IMR-90 (cell line): ENCODE measurements at regions of chr4 and their contacts with region 1.

Region 1: DNA sequence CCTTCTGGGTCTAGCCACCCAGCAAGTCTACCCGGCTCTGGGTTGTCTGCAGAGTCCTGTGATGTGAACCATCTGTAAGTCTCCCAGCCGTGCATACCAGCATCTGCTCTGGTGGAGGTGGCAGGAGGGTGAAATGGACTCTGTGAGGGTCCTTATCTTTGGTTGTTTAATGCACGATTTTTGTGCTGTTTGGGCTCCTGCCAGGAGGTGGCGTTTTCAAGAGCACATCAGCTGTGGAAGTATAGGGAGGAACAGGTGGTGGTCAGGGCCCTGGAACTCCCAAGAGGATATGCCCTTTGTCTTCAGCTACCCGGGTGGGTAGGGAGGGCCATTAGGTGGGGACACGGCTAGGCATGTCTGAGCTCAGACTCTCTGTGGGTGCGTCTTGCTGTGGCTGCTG is 66.5 kb upstream of the ZFP42 start:
- DNase-seq: no peak
- ATAC-seq: no peak
- H3K4me3 ChIP-seq: no peak overlapping the region
- H3K27ac ChIP-seq: no peak overlapping the region
- H3K4me1 ChIP-seq: peaks cover 2% of the 10 kb centered on the region; the same call in 1 of the 2 replicates
- H3K27me3 ChIP-seq: no peaks in the 10 kb centered on the region
- CTCF ChIP-seq: no peak
- POLR2A ChIP-seq: no peak
- RAD21 ChIP-seq: no peak

Region 2: DNA sequence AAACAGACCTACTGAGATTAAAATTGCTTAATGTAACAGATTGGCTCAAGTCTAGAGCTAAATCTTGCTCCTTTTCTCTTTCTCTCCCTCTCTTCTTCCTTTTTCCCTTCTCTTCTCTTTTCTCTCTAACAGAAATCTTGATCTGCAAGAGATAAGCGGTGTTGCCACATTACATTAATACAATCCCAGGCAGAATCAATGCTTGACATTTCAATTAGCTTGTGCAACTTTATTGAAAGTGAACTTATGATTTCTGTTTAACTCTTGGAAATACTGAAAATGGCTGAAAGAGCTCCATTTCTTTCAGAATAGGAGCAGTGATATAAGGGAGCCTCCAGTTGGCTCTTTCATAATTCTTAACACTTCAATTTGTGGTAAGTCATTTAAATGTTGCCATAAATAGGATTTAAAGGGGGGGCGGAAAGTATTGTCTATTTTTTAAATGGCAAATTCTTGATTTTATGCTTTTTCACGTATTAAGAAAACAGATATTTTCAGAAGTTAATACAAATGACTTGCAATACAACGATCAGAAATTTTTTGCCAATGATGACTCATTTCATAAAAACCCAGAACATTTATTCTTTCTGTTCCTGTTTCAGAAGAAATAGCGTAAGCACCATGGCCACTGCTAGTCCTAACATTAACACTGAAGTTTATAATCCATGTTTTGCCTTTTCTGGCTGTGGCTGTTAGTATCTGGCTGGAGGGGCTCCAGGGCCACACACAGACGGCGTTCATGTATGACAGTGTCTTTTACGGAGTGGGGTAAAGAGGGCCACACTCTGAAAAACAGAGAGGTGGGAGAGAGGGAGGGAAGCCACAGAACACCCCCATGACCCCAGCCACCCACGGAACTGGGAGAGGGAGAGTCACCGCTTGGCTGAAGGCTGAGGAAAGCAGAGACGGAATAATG is 1089.6 kb before region 1 on chr4:
- CTCF ChIA-PET with region 1: no interaction called
- POLR2A ChIA-PET with region 1: no interaction called
- dilution Hi-C with region 1: no loop called
- in situ Hi-C with region 1: no loop called
- intact Hi-C with region 1: loop called (anchors 10 kb)
- DNase-seq: peak; percentile 92
- ATAC-seq: peak; percentile 81
- H3K4me3 ChIP-seq: peak overlapping the region; percentile 28
- H3K27ac ChIP-seq: peak overlapping the region; percentile 90
- H3K4me1 ChIP-seq: peaks cover 18% of the 10 kb centered on the region
- H3K27me3 ChIP-seq: no peaks in the 10 kb centered on the region
- CTCF ChIP-seq: no peak
- POLR2A ChIP-seq: peak; percentile 42; the same call in 1 of the 2 replicates
- RAD21 ChIP-seq: no peak

Region 3: DNA sequence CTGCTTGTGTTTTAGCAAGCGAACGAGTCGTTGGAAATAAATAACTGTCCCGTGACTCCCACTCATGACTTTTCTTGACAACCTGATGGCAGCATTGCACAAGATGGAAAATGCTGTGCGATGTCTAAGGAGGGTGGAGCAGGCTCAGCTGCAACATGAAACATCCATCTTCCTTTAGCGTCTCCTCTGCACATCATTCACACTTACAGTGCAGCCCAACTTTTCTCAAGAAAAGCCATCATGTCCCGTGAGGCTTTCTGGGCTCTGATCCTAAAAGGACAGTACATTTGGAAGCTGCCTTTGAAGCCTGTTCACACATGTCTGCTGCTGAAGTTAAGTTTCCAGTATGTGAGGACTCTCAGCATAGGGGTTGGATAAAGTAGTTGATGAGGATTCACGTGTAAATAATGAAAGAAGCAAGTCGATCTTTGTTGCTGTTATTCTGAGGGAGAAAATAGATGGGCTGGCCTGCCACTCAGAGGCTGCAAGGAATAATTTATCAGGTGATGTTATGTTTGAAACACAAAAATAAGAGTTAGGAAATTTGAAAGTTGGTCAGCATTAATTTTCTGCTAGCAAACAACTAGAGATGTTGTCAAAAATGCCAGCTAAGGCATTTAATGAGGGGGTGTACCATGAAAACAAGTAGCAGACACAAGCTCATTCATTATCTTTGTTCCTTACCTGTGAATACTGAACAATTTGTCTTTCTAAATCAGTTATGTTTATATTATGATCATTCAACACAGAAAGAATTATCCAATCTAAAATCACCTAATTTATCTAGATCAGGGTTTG is 262.1 kb before region 1 on chr4:
- CTCF ChIA-PET with region 1: no interaction called
- POLR2A ChIA-PET with region 1: no interaction called
- dilution Hi-C with region 1: no loop called
- in situ Hi-C with region 1: no loop called
- intact Hi-C with region 1: loop called (anchors 10 kb)
- DNase-seq: peak; percentile 38
- ATAC-seq: peak; percentile 52
- H3K4me3 ChIP-seq: no peak overlapping the region
- H3K27ac ChIP-seq: peak overlapping the region; percentile 12; the same call in 1 of the 2 replicates
- H3K4me1 ChIP-seq: peaks cover 11% of the 10 kb centered on the region
- H3K27me3 ChIP-seq: no peaks in the 10 kb centered on the region
- CTCF ChIP-seq: no peak
- POLR2A ChIP-seq: no peak
- RAD21 ChIP-seq: peak; percentile 26; the same call in 1 of the 2 replicates